Mammary epithelial cell (primary cell): ENCODE measurements at regions of chr10 and their contacts with region 1.

Region 1: DNA sequence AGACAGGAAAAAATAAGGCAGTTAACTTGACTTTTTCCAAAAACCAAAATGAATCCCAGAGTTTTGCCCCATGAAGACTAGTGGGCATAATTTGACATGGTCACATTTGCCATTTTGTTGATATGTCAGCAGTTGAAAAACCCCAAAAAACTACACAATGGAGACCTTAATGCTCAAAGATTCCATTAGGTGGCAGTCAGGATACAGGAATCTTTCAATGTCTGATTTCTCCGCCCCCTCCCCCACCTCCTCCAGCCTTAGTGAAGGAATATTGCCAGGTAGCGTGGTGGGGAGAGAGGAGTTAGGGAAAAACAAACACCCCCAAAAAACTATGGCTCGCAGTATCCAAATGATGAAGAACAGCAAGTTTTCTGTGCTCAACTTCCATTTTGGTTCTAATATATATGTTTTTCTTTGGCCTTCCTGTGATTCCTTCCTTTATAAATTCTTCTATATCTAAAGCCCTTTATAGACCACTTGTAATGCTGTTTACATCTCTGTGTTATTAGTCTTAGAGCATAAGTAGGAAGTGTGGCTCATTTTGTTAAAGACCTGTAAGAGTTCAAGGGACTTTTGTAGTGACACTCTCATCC is 6.7 kb upstream of the SMNDC1 start:
- DNase-seq: peak; percentile 47
- H3K4me3 ChIP-seq: no peak overlapping the region
- H3K27ac ChIP-seq: no peak overlapping the region
- H3K4me1 ChIP-seq: peaks cover 10% of the 10 kb centered on the region
- H3K27me3 ChIP-seq: no peaks in the 10 kb centered on the region
- CTCF ChIP-seq: peak; percentile 66 to 71

Region 2: GRCh38 chr10:110354322-110354766 is 42.9 kb after region 1 on chr10:
- CTCF ChIA-PET with region 1: interaction called, 3 read pairs
- dilution Hi-C with region 1: no loop called
- in situ Hi-C with region 1: no loop called
- intact Hi-C with region 1: loop called (anchors 1 kb)
- DNase-seq: peak; percentile 87
- H3K4me3 ChIP-seq: peak overlapping the region; percentile 25 to 33 (median 32)
- H3K27ac ChIP-seq: peak overlapping the region; percentile 99
- H3K4me1 ChIP-seq: peaks cover 59% of the 10 kb centered on the region
- H3K27me3 ChIP-seq: no peaks in the 10 kb centered on the region
- CTCF ChIP-seq: peak; percentile 83 to 86

Region 3: DNA sequence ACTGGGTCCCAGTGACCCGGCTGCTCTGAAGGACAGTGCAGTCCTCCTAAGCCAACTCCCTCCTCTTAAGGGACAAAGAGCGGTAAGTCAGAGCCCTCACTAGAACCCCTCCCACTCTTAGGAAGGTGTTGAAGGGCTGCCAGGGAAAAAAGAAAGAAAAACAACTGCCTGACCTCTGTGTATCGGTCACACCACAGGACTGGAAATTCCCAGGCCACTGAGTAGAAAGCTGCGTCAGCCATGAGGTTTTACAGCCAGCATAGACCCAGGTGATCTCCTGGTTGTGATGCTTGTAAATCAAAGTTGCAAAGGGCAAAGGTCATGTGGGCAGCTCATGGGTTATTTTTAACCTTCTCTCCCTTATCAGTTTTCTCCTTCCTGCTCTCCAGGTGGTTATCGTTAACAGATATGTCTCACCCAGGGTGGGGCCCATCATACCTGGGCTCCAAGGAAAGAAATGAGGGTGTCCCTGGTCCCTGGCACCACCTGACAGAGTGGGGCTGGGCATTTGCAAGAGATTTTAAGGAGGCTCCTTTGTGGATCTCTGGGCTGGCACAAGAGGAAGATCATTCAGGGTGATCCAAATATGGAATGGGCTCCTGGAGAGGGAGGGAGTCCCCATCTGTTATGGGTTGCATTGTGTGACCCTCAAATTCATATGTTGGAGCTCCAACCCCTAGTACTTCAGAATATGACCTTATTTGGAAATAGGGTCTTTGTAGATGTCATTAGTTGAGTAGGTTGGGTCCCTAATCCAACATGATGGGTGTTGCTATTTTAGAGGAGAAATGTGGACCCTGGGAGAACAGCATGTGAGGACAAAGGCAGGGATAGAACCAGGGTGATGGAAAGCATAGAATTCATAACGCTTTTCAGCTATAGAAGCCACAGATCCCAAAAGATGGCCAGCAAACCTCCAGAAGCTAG is 84.5 kb after region 1 on chr10:
- CTCF ChIA-PET with region 1: no interaction called
- dilution Hi-C with region 1: no loop called
- in situ Hi-C with region 1: no loop called
- intact Hi-C with region 1: loop called (anchors 2 kb)
- DNase-seq: peak; percentile 97
- H3K4me3 ChIP-seq: no peak overlapping the region
- H3K27ac ChIP-seq: peak overlapping the region; percentile 66
- H3K4me1 ChIP-seq: peaks cover 50% of the 10 kb centered on the region
- H3K27me3 ChIP-seq: no peaks in the 10 kb centered on the region
- CTCF ChIP-seq: no peak

Region 4: GRCh38 chr10:110497438-110498086 is 186.1 kb after region 1 on chr10 and contains the start of gene DUSP5:
- CTCF ChIA-PET with region 1: interaction called, 15 read pairs
- dilution Hi-C with region 1: no loop called
- in situ Hi-C with region 1: no loop called
- intact Hi-C with region 1: loop called (anchors 1 kb)
- DNase-seq: peak; percentile 96
- H3K4me3 ChIP-seq: peak within 1 kb of the TSS; percentile 80 to 90 (median 82)
- H3K27ac ChIP-seq: peak within 1 kb of the TSS; percentile 92
- H3K4me1 ChIP-seq: peaks cover 49% of the 10 kb centered on the region
- H3K27me3 ChIP-seq: no peaks in the 10 kb centered on the region
- CTCF ChIP-seq: no peak
- total RNA-seq, gene DUSP5: 18.0 to 107 TPM

Region 5: GRCh38 chr10:110600487-110601101 is 289.1 kb after region 1 on chr10:
- CTCF ChIA-PET with region 1: no interaction called
- dilution Hi-C with region 1: no loop called
- in situ Hi-C with region 1: no loop called
- intact Hi-C with region 1: loop called (anchors 1 kb)
- DNase-seq: peak; percentile 43
- H3K4me3 ChIP-seq: no peak overlapping the region
- H3K27ac ChIP-seq: no peak overlapping the region
- H3K4me1 ChIP-seq: no peaks in the 10 kb centered on the region
- H3K27me3 ChIP-seq: no peaks in the 10 kb centered on the region
- CTCF ChIP-seq: peak; percentile 52 to 58

Region 6: DNA sequence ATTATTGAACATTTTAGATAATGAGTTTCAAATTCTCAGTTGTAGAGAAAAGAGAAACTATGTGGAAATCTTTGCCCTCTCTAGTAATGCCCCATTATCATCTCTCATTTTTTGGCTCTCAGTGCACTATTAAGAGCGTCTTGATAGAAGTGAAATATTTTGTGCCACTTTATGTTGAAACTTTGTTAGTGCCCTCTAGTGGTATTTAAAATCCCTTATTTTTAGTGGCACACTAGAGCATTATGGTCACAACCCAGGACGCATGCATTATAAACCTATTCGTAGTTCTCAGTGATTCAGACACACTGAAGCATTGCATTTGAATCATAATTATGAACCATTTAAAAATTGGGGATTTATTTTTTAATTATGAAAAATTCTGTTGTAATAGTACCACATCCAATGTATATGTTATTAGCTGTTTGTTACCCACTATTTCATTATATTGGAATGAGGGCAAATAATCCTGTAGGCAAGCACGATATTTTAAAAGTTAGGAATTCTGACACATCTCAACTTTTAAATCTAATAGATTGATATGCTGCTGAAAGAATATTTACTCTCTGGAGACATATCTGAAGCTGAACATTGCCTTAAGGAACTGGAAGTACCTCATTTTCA is 582.2 kb after region 1 on chr10:
- CTCF ChIA-PET with region 1: no interaction called
- dilution Hi-C with region 1: no loop called
- in situ Hi-C with region 1: no loop called
- intact Hi-C with region 1: loop called (anchors 5 kb)
- DNase-seq: peak; percentile 28
- H3K4me3 ChIP-seq: no peak overlapping the region
- H3K27ac ChIP-seq: no peak overlapping the region
- H3K4me1 ChIP-seq: peaks cover 3% of the 10 kb centered on the region
- H3K27me3 ChIP-seq: no peaks in the 10 kb centered on the region
- CTCF ChIP-seq: peak; percentile 43 to 52